GM12878 (cell line): ENCODE measurements at regions of chr5 and their contacts with region 1.

Region 1: DNA sequence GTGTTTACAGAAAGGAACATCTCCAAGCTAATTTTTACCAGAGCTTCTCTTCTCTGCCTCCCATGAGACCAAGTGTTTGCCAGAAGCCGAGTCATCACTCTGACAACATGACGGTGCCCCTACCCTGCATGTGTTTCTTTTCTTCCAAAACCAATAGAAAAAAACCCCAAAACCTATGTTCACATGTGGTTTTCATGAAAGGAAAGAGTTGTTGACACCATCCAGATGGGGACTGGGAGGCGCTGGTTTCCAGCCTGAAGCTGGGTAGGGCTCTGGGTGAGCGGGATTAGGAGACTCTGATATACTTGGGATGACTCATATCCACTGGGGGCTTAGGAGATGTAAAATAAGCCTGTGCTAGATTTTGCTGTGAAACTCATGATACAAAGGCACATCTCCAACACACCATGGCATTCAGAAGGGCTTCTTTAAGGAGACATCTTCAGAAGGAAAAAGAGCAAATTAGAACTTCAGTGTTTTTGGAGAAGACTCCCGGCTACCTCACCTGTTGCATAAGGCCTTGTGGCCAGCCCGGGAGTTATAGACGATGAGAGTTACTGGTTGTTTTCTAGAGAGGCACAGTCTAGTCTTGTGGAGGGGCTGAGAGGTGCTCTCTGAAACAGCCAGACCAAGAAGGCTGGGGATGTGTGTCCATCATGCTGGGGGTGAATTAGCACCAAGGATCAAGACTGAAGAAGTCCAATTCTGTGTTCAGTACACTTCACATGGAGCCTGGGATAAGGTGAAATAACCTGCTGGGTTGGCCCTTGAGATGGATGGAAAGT is 108.9 kb upstream of the LHFPL2 start:
- DNase-seq: peak; percentile 66
- ATAC-seq: peak; percentile 61
- H3K4me3 ChIP-seq: peak overlapping the region; percentile 10; the same call in 1 of the 2 replicates
- H3K27ac ChIP-seq: peak overlapping the region; percentile 97
- H3K4me1 ChIP-seq: peaks cover 65% of the 10 kb centered on the region
- H3K27me3 ChIP-seq: no peaks in the 10 kb centered on the region
- CTCF ChIP-seq: no peak
- EP300 ChIP-seq: peak; percentile 29 to 74; a peak in 3 of 4 replicates
- POLR2A ChIP-seq: no peak
- RAD21 ChIP-seq: no peak

Region 2: GRCh38 chr5:78483809-78484521 is 273.5 kb before region 1 on chr5:
- CTCF ChIA-PET with region 1: no interaction called
- POLR2A ChIA-PET with region 1: no interaction called
- RAD21 ChIA-PET with region 1: no interaction called
- SMC1A ChIA-PET with region 1: no interaction called
- in situ Hi-C with region 1: no loop called
- intact Hi-C with region 1: no loop called
- DNase-seq: peak; percentile 69
- ATAC-seq: peak; percentile 97
- H3K4me3 ChIP-seq: no peak overlapping the region
- H3K27ac ChIP-seq: peak overlapping the region; percentile 28; the same call in 1 of the 2 replicates
- H3K4me1 ChIP-seq: peaks cover 15% of the 10 kb centered on the region
- H3K27me3 ChIP-seq: no peaks in the 10 kb centered on the region
- CTCF ChIP-seq: no peak
- EP300 ChIP-seq: 0 out of 4 replicates have a peak, but pooled peaks of 1 of the 2 experiments have one; percentile 24
- POLR2A ChIP-seq: no peak
- RAD21 ChIP-seq: no peak

Region 3: GRCh38 chr5:78638423-78638822 is 119.0 kb before region 1 on chr5:
- CTCF ChIA-PET with region 1: interaction called, 7 read pairs
- POLR2A ChIA-PET with region 1: interaction called, 3 read pairs
- RAD21 ChIA-PET with region 1: interaction called, 7 read pairs
- SMC1A ChIA-PET with region 1: interaction called, 13 read pairs
- in situ Hi-C with region 1: no loop called
- intact Hi-C with region 1: no loop called
- DNase-seq: no peak
- ATAC-seq: no peak
- H3K4me3 ChIP-seq: no peak overlapping the region
- H3K27ac ChIP-seq: no peak overlapping the region
- H3K4me1 ChIP-seq: peaks cover 24% of the 10 kb centered on the region
- H3K27me3 ChIP-seq: no peaks in the 10 kb centered on the region
- CTCF ChIP-seq: no peak
- EP300 ChIP-seq: no peak
- POLR2A ChIP-seq: no peak
- RAD21 ChIP-seq: no peak

Region 4: GRCh38 chr5:78720227-78720985 is 37.1 kb before region 1 on chr5:
- CTCF ChIA-PET with region 1: no interaction called
- POLR2A ChIA-PET with region 1: interaction called, 3 read pairs
- RAD21 ChIA-PET with region 1: interaction called, 28 read pairs
- SMC1A ChIA-PET with region 1: interaction called, 100 read pairs
- in situ Hi-C with region 1: no loop called
- intact Hi-C with region 1: no loop called
- DNase-seq: no peak
- ATAC-seq: peak; percentile 15; the same call in 2 of the 3 replicates
- H3K4me3 ChIP-seq: no peak overlapping the region
- H3K27ac ChIP-seq: no peak overlapping the region
- H3K4me1 ChIP-seq: peaks cover 13% of the 10 kb centered on the region
- H3K27me3 ChIP-seq: no peaks in the 10 kb centered on the region
- CTCF ChIP-seq: no peak
- EP300 ChIP-seq: no peak
- POLR2A ChIP-seq: no peak
- RAD21 ChIP-seq: no peak

Region 5: GRCh38 chr5:78738693-78739300 is 18.7 kb before region 1 on chr5:
- CTCF ChIA-PET with region 1: interaction called, 15 read pairs
- POLR2A ChIA-PET with region 1: interaction called, 4 read pairs
- RAD21 ChIA-PET with region 1: interaction called, 132 read pairs
- SMC1A ChIA-PET with region 1: interaction called, 43 read pairs
- in situ Hi-C with region 1: no loop called
- intact Hi-C with region 1: loop called (anchors 1 kb)
- DNase-seq: no peak
- ATAC-seq: no peak
- H3K4me3 ChIP-seq: no peak overlapping the region
- H3K27ac ChIP-seq: no peak overlapping the region
- H3K4me1 ChIP-seq: peaks cover 24% of the 10 kb centered on the region
- H3K27me3 ChIP-seq: no peaks in the 10 kb centered on the region
- CTCF ChIP-seq: no peak
- EP300 ChIP-seq: no peak
- POLR2A ChIP-seq: no peak
- RAD21 ChIP-seq: no peak

Region 6: GRCh38 chr5:78795757-78796156 is 38.3 kb after region 1 on chr5:
- CTCF ChIA-PET with region 1: interaction called, 3 read pairs
- POLR2A ChIA-PET with region 1: interaction called, 4 read pairs
- RAD21 ChIA-PET with region 1: interaction called, 3 read pairs
- SMC1A ChIA-PET with region 1: interaction called, 16 read pairs
- in situ Hi-C with region 1: no loop called
- intact Hi-C with region 1: loop called (anchors 2 kb)
- DNase-seq: no peak
- ATAC-seq: peak; percentile 79
- H3K4me3 ChIP-seq: no peak overlapping the region
- H3K27ac ChIP-seq: no peak overlapping the region
- H3K4me1 ChIP-seq: peaks cover 15% of the 10 kb centered on the region; the same call in 1 of the 2 replicates
- H3K27me3 ChIP-seq: no peaks in the 10 kb centered on the region
- CTCF ChIP-seq: no peak
- EP300 ChIP-seq: no peak
- POLR2A ChIP-seq: no peak
- RAD21 ChIP-seq: no peak

Region 7: GRCh38 chr5:78886341-78887230 is 129.1 kb after region 1 on chr5:
- CTCF ChIA-PET with region 1: interaction called, 10 read pairs
- POLR2A ChIA-PET with region 1: no interaction called
- RAD21 ChIA-PET with region 1: interaction called, 6 read pairs
- SMC1A ChIA-PET with region 1: interaction called, 5 read pairs
- in situ Hi-C with region 1: loop called (anchors 5 kb)
- intact Hi-C with region 1: loop called (anchors 5 kb)
- DNase-seq: no peak
- ATAC-seq: peak; percentile 25
- H3K4me3 ChIP-seq: no peak overlapping the region
- H3K27ac ChIP-seq: no peak overlapping the region
- H3K4me1 ChIP-seq: peaks cover 21% of the 10 kb centered on the region
- H3K27me3 ChIP-seq: no peaks in the 10 kb centered on the region; a peak in 1 of 4 replicates
- CTCF ChIP-seq: peak; percentile 37 to 52 (median 38); a peak in 5 of 6 replicates
- EP300 ChIP-seq: no peak
- POLR2A ChIP-seq: no peak
- RAD21 ChIP-seq: peak; percentile 51

Region 8: GRCh38 chr5:78964887-78965286 is 207.4 kb after region 1 on chr5:
- CTCF ChIA-PET with region 1: interaction called, 10 read pairs
- POLR2A ChIA-PET with region 1: no interaction called
- RAD21 ChIA-PET with region 1: no interaction called
- SMC1A ChIA-PET with region 1: interaction called, 3 read pairs
- in situ Hi-C with region 1: no loop called
- intact Hi-C with region 1: no loop called
- DNase-seq: no peak
- ATAC-seq: peak; percentile 88
- H3K4me3 ChIP-seq: no peak overlapping the region
- H3K27ac ChIP-seq: no peak overlapping the region
- H3K4me1 ChIP-seq: no peaks in the 10 kb centered on the region
- H3K27me3 ChIP-seq: no peaks in the 10 kb centered on the region
- CTCF ChIP-seq: peak; percentile 43 to 70 (median 45); a peak in 4 of 6 replicates
- EP300 ChIP-seq: no peak
- POLR2A ChIP-seq: no peak
- RAD21 ChIP-seq: peak; percentile 92